H1 (cell line): ENCODE measurements at regions of chr10 and their contacts with region 1.

Region 1: DNA sequence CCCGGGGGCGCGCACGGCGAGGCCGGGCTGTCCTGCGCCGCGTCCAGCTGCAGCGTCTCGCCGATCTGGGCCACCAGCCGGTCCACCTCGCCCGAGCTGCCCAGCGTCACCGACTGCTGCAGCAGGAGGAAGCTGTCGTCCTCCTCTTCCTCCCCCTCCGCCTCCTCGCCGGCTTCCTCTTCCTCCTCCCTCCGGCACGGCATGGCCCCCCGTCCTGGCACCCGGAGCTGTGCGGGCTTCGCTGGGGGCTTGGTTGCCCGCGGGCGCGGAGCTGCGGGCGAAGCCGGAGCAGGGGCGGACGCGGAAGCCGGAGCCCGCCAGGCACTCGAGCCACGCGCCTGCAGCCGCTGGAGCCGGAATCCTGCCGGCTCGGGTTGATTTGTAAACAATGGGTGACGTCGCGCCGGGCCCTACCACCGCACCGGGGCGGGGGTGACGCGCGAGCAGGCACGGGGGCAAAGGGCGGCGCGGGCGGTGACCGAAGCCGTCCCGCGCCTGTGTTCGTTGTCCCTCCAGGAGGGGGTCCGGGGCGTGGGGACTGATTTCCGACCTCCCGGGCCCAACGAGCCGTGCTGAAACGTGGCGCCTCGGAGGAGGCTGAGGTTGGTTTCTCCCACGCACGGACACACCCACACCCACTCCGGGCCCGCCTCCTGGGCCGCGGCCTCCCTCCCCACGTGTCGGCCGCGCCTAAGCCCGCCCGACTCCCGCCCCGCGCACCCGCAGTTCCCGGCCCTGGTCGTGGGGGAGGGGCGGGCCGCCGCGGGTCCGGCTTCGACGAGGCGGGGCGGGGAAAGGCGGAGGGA is at the start of gene FRAT2:
- DNase-seq: peak in 1 of 2 experiments; percentile 95
- H3K4me3 ChIP-seq: peak within 1 kb of the TSS; percentile 84 to 92 (median 91)
- H3K27ac ChIP-seq: peak within 1 kb of the TSS; percentile 99
- H3K4me1 ChIP-seq: peaks cover 8 to 22% (median 12%) of the 10 kb centered on the region in 4 experiments
- H3K27me3 ChIP-seq: no peaks in the 10 kb centered on the region
- CTCF ChIP-seq: no peak
- EP300 ChIP-seq: peak in 1 of 2 experiments; percentile 93; a peak in 2 of 3 replicates
- POLR2A ChIP-seq: peak; percentile 69 to 84
- RAD21 ChIP-seq: no peak
- total RNA-seq, gene FRAT2: 83.0 and 87.7 TPM in 2 replicates

Region 2: DNA sequence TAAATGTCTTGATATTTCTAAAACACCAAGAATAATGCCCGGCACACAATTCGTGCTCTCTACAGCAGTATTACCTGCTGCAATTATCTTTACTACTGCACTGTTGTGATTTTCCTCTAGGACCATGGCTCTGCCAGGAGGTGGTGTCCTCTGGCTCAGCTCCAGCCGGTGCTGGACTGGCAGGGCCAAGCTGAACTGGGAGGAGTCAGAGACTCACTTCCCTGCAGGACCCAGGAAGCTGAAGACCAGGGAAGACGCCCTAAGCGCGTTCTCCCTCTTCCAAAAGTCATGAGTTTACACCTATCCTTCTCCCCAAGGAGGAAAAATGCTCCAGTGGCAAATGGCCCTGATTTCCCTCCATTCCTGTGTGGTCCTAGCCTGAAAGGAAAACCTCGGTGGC is 164.2 kb before region 1 on chr10:
- CTCF ChIA-PET with region 1: no interaction called
- POLR2A ChIA-PET with region 1: no interaction called
- DNase-seq: no peak
- H3K4me3 ChIP-seq: no peak overlapping the region
- H3K27ac ChIP-seq: no peak overlapping the region
- H3K4me1 ChIP-seq: peaks cover 0 to 1% (median 0%) of the 10 kb centered on the region in 4 experiments; a peak in 2 of 7 replicates
- H3K27me3 ChIP-seq: no peaks in the 10 kb centered on the region
- CTCF ChIP-seq: no peak
- EP300 ChIP-seq: no peak
- POLR2A ChIP-seq: no peak
- RAD21 ChIP-seq: no peak

Region 3: GRCh38 chr10:97267671-97268070 is 66.9 kb before region 1 on chr10:
- CTCF ChIA-PET with region 1: interaction called, 10 read pairs
- POLR2A ChIA-PET with region 1: interaction called, 4 read pairs
- DNase-seq: no peak
- H3K4me3 ChIP-seq: no peak overlapping the region
- H3K27ac ChIP-seq: no peak overlapping the region
- H3K4me1 ChIP-seq: peaks cover 3 to 7% (median 3%) of the 10 kb centered on the region in 4 experiments; a peak in 6 of 7 replicates
- H3K27me3 ChIP-seq: no peaks in the 10 kb centered on the region
- CTCF ChIP-seq: no peak
- EP300 ChIP-seq: no peak
- POLR2A ChIP-seq: no peak
- RAD21 ChIP-seq: no peak

Region 4: GRCh38 chr10:97292097-97292862 is 42.3 kb before region 1 on chr10 and contains the start of gene ARHGAP19:
- CTCF ChIA-PET with region 1: interaction called, 6 read pairs
- POLR2A ChIA-PET with region 1: interaction called, 32 read pairs
- DNase-seq: peak; percentile 92 to 93
- H3K4me3 ChIP-seq: peak within 1 kb of the TSS; percentile 64 to 89 (median 84)
- H3K27ac ChIP-seq: peak within 1 kb of the TSS; percentile 93
- H3K4me1 ChIP-seq: peaks cover 0 to 4% (median under 1%) of the 10 kb centered on the region in 4 experiments; a peak in 3 of 7 replicates
- H3K27me3 ChIP-seq: no peaks in the 10 kb centered on the region
- CTCF ChIP-seq: 0 out of 4 replicates have a peak, but pooled peaks of 1 of the 3 experiments have one; percentile 6
- EP300 ChIP-seq: no peak
- POLR2A ChIP-seq: peak; percentile 81 to 95
- RAD21 ChIP-seq: no peak; a peak in 1 of 4 replicates
- total RNA-seq, gene ARHGAP19: 32.1 and 33.4 TPM in 2 replicates

Region 5: GRCh38 chr10:97318772-97319651 is 15.6 kb before region 1 on chr10 and contains the start of gene FRAT1:
- CTCF ChIA-PET with region 1: interaction called, 28 read pairs
- POLR2A ChIA-PET with region 1: interaction called, 75 read pairs
- DNase-seq: peak; percentile 65 to 95
- H3K4me3 ChIP-seq: peak within 1 kb of the TSS; percentile 45 to 79 (median 70)
- H3K27ac ChIP-seq: peak within 1 kb of the TSS; percentile 100
- H3K4me1 ChIP-seq: peaks cover 0 to 15% (median 12%) of the 10 kb centered on the region in 4 experiments; a peak in 6 of 7 replicates
- H3K27me3 ChIP-seq: peaks cover 6 to 23% (median 20%) of the 10 kb centered on the region in 4 experiments
- CTCF ChIP-seq: no peak
- EP300 ChIP-seq: peak in 1 of 2 experiments; percentile 97; a peak in 2 of 3 replicates
- POLR2A ChIP-seq: peak in 1 of 2 experiments; percentile 50; a peak in 1 of 3 replicates
- RAD21 ChIP-seq: no peak
- total RNA-seq, gene FRAT1: 4.8 and 5.2 TPM in 2 replicates

Region 6: GRCh38 chr10:97349752-97350513 is 15.4 kb after region 1 on chr10:
- CTCF ChIA-PET with region 1: interaction called, 24 read pairs
- POLR2A ChIA-PET with region 1: interaction called, 19 read pairs
- DNase-seq: no peak
- H3K4me3 ChIP-seq: no peak overlapping the region
- H3K27ac ChIP-seq: no peak overlapping the region
- H3K4me1 ChIP-seq: peaks cover 0 to 8% (median under 1%) of the 10 kb centered on the region in 4 experiments; a peak in 1 of 7 replicates
- H3K27me3 ChIP-seq: no peaks in the 10 kb centered on the region
- CTCF ChIP-seq: no peak
- EP300 ChIP-seq: no peak
- POLR2A ChIP-seq: no peak
- RAD21 ChIP-seq: no peak